GM23248 (cell line): ENCODE measurements at regions of chr2 and their contacts with region 1.

Region 1: DNA sequence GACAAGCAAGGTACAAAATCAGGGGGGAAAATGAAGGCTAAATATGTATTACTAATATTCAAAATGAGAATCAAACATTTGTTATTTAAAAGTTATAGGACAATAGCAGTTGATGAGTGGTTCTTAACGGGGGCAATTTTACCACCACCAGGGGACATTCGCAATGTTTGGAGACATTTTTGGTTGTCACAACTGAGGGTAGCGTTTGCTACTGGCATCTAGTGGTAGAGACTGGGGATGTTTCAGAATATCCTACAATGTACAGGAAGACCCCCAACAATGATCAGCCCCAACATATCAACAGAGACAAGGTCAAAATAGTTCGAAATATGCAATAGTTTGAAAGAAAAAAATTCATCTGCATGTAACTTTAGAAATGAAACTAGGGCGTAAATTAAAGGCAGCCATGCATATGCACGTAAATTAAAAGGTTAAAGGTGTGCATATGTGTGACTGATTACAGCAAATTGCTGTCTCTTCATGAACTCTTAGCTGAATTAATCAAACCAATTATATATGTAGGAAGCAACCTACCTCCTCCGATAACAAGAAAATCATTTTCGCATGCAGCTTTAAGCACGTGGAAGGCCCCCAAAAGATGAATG is 61.2 kb upstream of the CUL3 start:
- DNase-seq: peak; percentile 31
- H3K4me3 ChIP-seq: no peak overlapping the region
- H3K27ac ChIP-seq: no peak overlapping the region
- H3K4me1 ChIP-seq: no peaks in the 10 kb centered on the region
- H3K27me3 ChIP-seq: peaks cover 7% of the 10 kb centered on the region; the same call in 1 of the 2 replicates

Region 2: GRCh38 chr2:223528036-223528435 is 1118.3 kb before region 1 on chr2:
- in situ Hi-C with region 1: no loop called
- DNase-seq: peak; percentile 90
- H3K4me3 ChIP-seq: no peak overlapping the region
- H3K27ac ChIP-seq: no peak overlapping the region
- H3K4me1 ChIP-seq: peaks cover 18% of the 10 kb centered on the region
- H3K27me3 ChIP-seq: no peaks in the 10 kb centered on the region

Region 3: GRCh38 chr2:224369028-224369632 is 277.2 kb before region 1 on chr2:
- in situ Hi-C with region 1: loop called (anchors 10 kb)
- DNase-seq: peak; percentile 75
- H3K4me3 ChIP-seq: no peak overlapping the region
- H3K27ac ChIP-seq: no peak overlapping the region
- H3K4me1 ChIP-seq: no peaks in the 10 kb centered on the region
- H3K27me3 ChIP-seq: peaks cover 6% of the 10 kb centered on the region; the same call in 1 of the 2 replicates